ENCODE measurements at regions of chr3 and their contacts with region 1.

Region 1: GRCh38 chr3:152258448-152259393 is 10.0 kb upstream of the MBNL1 start:
- DNase-seq: no peak
- CTCF ChIP-seq: no peak

Region 2: DNA sequence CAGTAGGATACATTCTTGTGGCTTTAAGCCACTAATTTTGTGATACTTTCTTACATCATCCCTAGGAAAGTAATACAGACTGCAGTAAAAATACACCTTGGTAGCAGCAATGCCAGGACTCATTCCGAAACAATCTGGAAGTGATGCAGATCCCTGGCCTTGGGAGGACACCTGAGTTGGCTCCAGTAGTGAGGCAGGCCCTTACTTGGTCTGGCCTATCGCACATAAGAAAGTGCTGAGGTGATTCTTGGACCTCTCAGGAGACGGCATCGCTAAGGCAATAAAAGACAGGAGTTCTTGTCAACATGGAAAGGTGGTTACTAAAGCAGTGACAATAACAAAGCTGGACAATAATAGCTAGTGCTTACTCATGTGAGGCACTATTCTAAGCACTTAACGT is 258.8 kb before region 1 on chr3:
- CTCF ChIA-PET with region 1: no interaction called
- POLR2A ChIA-PET with region 1: no interaction called
- DNase-seq: no peak
- CTCF ChIP-seq: no peak

Region 3: GRCh38 chr3:152243721-152244516 is 14.8 kb before region 1 on chr3:
- CTCF ChIA-PET with region 1: interaction called, 50 read pairs
- POLR2A ChIA-PET with region 1: no interaction called
- DNase-seq: no peak
- CTCF ChIP-seq: no peak

Region 4: GRCh38 chr3:152268555-152269425 is 10.1 kb after region 1 on chr3 and contains the start of gene MBNL1:
- CTCF ChIA-PET with region 1: interaction called, 14 read pairs
- POLR2A ChIA-PET with region 1: interaction called, 3 read pairs
- DNase-seq: peak; percentile 77
- CTCF ChIP-seq: no peak

Region 5: GRCh38 chr3:152291649-152292066 is 32.9 kb after region 1 on chr3:
- CTCF ChIA-PET with region 1: no interaction called
- POLR2A ChIA-PET with region 1: no interaction called
- DNase-seq: no peak
- CTCF ChIP-seq: no peak

Measured in GM10248 (cell line).